Activated CD8-positive, alpha-beta T cell treated with anti-CD3 and anti-CD28 coated beads, Interleukin-2, amount 10 ng/mL, durations not matched to agents 7 days and 5 days (primary cell): ENCODE measurements at regions of chr13 and their contacts with region 1.

Region 1: GRCh38 chr13:30371649-30372265 is 50.5 kb upstream of the UBE2L5 start:
- DNase-seq: peak; percentile 73
- ATAC-seq: peak; percentile 41
- H3K4me3 Mint-ChIP-seq: peak overlapping the region; percentile 57
- H3K27ac Mint-ChIP-seq: peak overlapping the region; percentile 87
- H3K4me1 Mint-ChIP-seq: peaks cover 78% of the 10 kb centered on the region
- H3K27me3 Mint-ChIP-seq: no peaks in the 10 kb centered on the region

Region 2: DNA sequence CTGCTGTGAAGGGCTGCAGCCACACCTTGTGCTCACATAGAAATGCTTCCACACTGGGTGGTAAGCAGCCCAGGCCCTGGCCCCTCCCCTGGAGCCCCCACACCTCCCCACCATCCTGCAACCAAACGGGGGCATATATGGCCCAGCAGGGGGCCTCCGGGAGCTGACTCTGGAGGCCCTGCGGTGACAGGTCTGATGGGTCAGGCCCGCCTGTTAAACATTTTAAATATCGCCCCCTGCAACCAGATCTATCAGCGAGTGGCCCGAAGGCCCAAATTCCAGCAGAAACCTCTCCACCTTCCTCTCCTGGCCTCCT is 16.4 kb before region 1 on chr13:
- CTCF ChIA-PET with region 1: interaction called, 32 read pairs
- POLR2A ChIA-PET with region 1: no interaction called
- DNase-seq: peak; percentile 51
- ATAC-seq: peak; percentile 80
- H3K4me3 Mint-ChIP-seq: no peak overlapping the region
- H3K27ac Mint-ChIP-seq: no peak overlapping the region
- H3K4me1 Mint-ChIP-seq: peaks cover 19% of the 10 kb centered on the region
- H3K27me3 Mint-ChIP-seq: peaks cover 10% of the 10 kb centered on the region

Region 3: DNA sequence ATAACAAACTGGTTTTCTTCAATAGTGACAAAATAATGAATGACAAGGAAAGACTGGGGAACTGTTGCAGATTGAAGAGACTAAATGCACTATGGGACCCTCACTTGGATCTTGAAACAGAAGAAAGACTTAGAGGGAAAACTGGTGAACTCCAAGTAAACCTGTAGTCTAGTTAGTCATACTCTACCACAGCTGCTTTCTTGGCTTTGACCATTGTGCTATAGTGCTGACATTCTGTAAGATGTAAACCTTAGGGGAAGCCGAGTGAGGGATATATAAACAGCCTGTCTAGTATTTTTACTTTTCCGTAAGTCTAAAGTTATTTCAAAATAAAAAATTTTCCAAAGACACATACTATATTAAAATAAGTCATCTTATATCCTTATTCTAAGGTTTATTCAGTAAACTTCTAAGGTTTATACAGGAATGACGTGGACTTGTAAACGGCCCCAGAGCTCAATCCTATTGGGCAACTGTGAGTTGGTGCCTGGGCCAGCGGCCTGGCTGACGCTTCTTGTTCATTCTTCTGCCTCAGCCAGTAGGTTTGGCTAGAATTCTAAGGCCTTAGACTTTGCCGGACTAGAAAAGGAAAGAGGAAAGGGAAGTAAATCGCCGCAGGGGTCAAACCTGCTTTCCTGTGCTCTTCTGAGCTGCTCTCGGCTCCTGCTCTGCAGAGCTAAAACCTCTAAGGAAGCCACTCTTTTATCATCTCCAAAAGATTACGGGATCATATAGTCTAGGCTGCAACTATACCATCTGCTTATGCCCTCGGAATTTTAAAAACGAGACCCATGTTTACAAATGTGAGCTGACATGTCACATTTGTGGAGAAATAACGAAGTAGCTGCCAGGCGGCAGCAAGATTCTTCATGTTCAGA is 16.9 kb after region 1 on chr13:
- CTCF ChIA-PET with region 1: interaction called, 69 read pairs
- POLR2A ChIA-PET with region 1: interaction called, 94 read pairs
- DNase-seq: no peak
- ATAC-seq: peak; percentile 35
- H3K4me3 Mint-ChIP-seq: peak overlapping the region; percentile 64
- H3K27ac Mint-ChIP-seq: peak overlapping the region; percentile 79
- H3K4me1 Mint-ChIP-seq: peaks cover 49% of the 10 kb centered on the region
- H3K27me3 Mint-ChIP-seq: no peaks in the 10 kb centered on the region

Region 4: GRCh38 chr13:30395192-30396084 is 23.7 kb after region 1 on chr13:
- CTCF ChIA-PET with region 1: interaction called, 69 read pairs
- POLR2A ChIA-PET with region 1: interaction called, 94 read pairs
- DNase-seq: peak; percentile 84
- ATAC-seq: peak; percentile 61
- H3K4me3 Mint-ChIP-seq: peak overlapping the region; percentile 79
- H3K27ac Mint-ChIP-seq: peak overlapping the region; percentile 97
- H3K4me1 Mint-ChIP-seq: peaks cover 46% of the 10 kb centered on the region
- H3K27me3 Mint-ChIP-seq: no peaks in the 10 kb centered on the region

Region 5: DNA sequence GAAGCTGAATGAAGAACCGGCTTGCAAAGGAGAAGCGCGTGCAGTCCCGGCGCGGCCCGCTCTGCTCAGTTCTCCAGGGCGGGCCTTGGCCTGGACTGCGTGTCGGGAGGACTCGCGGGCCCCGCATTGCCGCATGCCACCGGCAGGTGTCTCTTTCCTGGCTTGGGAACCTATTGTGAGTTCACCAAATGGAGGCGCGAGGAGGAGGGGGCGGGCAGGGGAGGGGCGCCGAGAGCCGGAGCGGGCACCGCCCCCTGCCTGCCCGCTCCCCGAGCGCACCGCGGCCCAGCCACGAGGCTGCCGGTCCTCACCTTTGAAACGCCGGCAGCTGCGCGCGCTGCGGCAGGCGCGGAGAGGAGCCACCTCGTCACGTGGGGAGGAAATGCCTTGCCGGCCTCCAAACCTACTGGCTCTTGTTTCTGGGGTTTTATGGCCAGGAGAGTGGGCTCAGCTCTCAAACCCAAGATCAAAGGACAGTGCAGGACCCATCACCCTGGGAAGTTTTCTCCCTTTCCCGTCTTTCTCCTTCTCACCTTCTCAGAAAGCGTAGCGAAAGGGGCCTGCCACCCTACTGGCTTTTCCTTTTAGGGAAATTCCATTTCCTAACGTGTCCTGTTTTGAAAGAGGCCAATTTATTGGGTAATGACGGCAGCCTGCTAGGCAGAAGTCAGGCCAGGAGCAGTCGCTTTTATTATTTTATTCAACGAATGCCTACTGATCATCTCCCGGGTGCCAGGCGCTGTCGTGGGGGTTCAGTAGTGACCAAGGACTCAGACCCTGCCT is 36.8 kb after region 1 on chr13:
- CTCF ChIA-PET with region 1: interaction called, 17 read pairs
- POLR2A ChIA-PET with region 1: interaction called, 4 read pairs
- DNase-seq: peak; percentile 93
- ATAC-seq: peak; percentile 97
- H3K4me3 Mint-ChIP-seq: peak overlapping the region; percentile 52
- H3K27ac Mint-ChIP-seq: peak overlapping the region; percentile 55
- H3K4me1 Mint-ChIP-seq: peaks cover 27% of the 10 kb centered on the region
- H3K27me3 Mint-ChIP-seq: peaks cover 10% of the 10 kb centered on the region

Region 6: DNA sequence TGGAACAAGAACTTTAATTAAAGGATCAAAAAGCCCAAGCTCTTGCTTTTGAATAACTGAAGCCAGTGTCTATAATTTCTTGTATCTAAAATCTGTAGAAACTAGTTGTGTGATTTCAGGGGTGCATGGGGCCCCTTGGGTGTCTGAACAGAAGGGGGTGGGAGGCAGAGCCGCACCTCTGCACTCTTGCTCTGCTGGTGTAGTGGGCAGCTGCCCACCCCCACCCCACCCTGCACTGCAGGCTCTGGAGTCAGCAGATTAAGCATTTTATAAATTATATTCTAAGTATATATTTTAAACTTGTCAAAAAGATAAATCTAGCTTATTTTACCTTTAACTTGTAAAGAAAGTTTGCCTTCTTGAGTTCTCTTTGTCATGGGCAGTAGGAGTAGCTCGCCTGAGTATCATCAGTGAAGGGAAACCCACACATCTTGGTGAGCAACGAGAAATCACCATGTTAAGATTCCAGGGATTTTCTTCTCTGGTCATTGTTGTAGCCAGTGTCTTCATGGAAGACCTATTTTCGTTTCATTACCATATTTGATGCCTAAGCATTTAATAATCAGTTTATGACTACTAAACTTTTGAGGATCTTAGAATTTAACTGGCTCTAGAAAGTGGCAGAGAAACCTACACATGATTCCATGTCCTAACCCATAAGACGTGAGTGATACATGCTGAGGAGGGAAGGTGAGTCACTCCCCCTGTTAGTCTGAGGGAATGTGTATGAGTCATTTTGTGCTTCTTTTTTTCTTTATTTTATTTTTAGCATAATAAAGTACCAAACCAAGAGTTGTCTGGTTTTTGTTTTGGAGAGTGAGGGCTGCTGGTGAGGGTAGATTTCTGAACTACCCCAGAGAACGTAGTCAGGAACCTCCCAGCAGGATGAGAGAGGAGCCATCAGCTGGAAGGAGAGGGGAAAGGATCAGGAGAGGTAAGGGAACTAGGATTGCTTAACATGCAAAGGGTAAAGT is 58.3 kb after region 1 on chr13:
- CTCF ChIA-PET with region 1: interaction called, 10 read pairs
- POLR2A ChIA-PET with region 1: interaction called, 3 read pairs
- DNase-seq: no peak
- ATAC-seq: peak; percentile 62
- H3K4me3 Mint-ChIP-seq: no peak overlapping the region
- H3K27ac Mint-ChIP-seq: no peak overlapping the region
- H3K4me1 Mint-ChIP-seq: peaks cover 33% of the 10 kb centered on the region
- H3K27me3 Mint-ChIP-seq: no peaks in the 10 kb centered on the region

Region 7: DNA sequence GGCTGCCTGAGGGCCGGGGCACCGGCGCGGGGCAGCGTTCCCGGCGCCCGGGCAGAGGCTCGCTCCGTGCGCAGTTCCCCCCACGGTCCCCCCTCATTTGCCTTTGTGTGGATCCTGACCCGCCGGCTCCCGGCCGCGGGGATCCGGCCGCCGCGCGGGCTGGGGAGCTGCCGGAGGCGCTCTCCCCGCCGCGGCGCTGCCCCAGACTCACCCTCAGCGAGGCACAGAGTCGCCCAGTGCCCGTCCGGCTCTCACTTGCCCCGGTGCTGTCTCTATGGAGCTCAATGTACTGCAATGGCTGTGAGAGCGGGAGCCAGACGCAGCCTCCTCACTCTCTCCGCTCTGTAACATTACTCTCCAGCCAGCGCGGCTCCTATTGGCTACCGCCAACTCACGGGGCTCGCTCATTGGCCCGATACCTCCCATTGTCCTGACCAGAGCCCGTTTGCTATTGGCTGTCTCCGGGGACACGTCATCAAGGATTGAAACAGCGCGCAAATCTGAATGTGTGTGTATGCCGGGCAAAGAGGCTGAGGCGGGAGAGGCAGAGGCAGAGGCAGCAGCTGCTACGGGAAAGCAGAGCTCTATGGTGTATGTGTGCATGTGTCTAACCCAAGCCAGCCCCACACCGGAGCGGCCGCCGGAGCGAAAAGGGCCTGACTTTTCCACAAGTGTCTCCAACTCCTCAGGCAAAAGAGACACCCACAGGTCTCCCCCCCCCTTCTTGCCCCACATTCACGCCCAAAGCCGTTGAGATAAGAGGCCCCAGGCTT is 94.0 kb after region 1 on chr13 and contains the start of gene HMGB1:
- CTCF ChIA-PET with region 1: interaction called, 11 read pairs
- POLR2A ChIA-PET with region 1: interaction called, 12 read pairs
- DNase-seq: peak; percentile 99
- ATAC-seq: peak; percentile 95
- H3K4me3 Mint-ChIP-seq: peak within 1 kb of the TSS; percentile 88
- H3K27ac Mint-ChIP-seq: peak within 1 kb of the TSS; percentile 98
- H3K4me1 Mint-ChIP-seq: peaks cover 28% of the 10 kb centered on the region
- H3K27me3 Mint-ChIP-seq: no peaks in the 10 kb centered on the region
- total RNA-seq, gene HMGB1: 650 to 662 TPM